Naive thymus-derived CD4-positive, alpha-beta T cell (primary cell): ENCODE measurements at regions of chr14 and their contacts with region 1.

Region 1: DNA sequence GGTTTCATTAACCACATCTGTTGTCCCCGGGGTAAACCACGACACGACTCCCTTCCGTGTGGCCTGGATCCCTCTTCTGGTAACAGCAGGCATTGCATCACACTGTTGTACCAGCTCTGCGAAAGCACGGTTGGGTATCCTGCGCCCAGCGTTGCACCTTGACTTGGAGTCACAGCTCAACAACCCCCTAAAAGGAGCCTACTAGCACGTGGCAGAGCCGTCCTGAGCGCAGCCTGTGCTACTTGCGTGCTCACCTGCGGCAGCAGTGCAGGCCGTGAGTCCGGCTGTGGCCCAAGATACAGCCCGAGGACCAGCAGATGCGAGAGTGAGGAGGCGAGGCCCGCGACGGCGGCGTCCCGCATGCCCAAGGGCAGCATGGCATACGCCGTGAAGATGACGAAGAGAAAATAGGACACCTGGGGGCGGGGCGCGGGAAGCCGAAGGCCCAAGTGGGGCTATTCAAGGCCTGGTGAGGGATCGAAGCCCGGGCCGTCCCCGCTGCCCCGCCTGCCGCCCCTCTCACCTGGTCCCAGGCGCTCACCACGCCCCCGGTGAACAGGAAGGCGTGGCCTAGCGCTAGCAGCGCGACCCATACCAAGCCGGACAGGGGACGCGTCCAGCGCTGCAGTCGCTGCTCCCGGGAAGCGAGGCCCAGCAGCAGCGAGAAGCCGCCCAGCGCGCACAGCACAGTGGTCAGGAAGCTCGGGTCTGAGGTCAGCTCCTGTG is 2.4 kb downstream of the ADCY4 start:
- DNase-seq: peak; percentile 56 to 93 (median 87)
- ATAC-seq: peak; percentile 90
- H3K4me3 ChIP-seq: peak overlapping the region; percentile 43
- H3K4me3 Mint-ChIP-seq: peak overlapping the region; percentile 66 to 94 (median 83)
- H3K27ac ChIP-seq: no peak overlapping the region
- H3K27ac Mint-ChIP-seq: peak overlapping the region; percentile 57 to 93 (median 84)
- H3K4me1 ChIP-seq: peaks cover 37 to 59% of the 10 kb centered on the region in 2 donors
- H3K4me1 Mint-ChIP-seq: peaks cover 25 to 62% (median 40%) of the 10 kb centered on the region in 7 donors
- H3K27me3 ChIP-seq: peaks cover 7 to 13% of the 10 kb centered on the region in 2 donors
- H3K27me3 Mint-ChIP-seq: peaks cover 9 to 46% (median 17%) of the 10 kb centered on the region in 5 donors

Region 2: DNA sequence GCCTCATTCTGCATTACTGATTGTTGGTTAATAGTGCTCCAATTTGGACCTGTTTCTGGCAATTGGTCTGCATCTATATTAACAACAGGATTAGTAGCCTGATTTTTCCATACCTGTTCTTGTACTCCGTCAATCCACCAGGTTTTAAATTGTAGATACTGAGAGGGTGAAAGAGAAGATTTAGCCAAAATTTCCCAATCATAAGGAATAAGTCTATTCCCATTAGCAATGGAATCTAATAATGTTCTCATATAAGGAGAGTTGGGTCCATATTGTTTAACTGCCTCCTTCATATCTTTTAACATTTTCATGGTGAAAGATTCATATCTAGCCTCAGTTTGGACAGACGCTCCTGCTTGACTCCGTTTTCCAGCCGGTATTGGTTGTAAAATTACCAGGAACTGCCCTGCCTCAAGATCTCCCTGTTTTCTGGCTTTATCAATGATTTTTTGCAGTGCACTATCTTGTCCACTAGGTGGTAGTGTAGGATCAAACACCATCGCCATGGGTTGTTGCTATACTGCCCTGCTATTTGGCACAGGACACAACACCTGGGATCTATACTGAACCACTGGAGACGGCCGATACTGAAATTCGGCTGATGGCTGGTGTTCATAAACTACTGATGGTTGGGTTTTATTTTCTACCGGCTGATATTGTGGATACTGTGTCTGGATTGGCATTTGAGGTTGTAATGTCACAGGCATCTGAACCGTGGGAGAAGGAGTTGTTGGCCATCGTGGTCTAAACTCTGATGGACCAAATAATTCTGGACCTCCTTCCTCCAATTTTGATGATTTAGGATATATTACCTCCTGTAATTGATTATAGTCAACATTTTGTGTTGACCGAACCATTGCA is 318.5 kb before region 1 on chr14:
- CTCF ChIA-PET with region 1: no interaction called
- POLR2A ChIA-PET with region 1: no interaction called
- intact Hi-C with region 1: loop called in 1 of 2 experiments (anchors 1 kb)
- DNase-seq: peak in 8 of 9 donors; percentile 17 to 76 (median 67)
- ATAC-seq: peak; percentile 94
- H3K4me3 ChIP-seq: no peak overlapping the region
- H3K4me3 Mint-ChIP-seq: no peak overlapping the region
- H3K27ac ChIP-seq: no peak overlapping the region
- H3K27ac Mint-ChIP-seq: no peak overlapping the region
- H3K4me1 ChIP-seq: peaks cover 0 to 6% of the 10 kb centered on the region in 2 donors
- H3K4me1 Mint-ChIP-seq: peaks cover 8 to 28% (median 25%) of the 10 kb centered on the region in 7 donors
- H3K27me3 ChIP-seq: no peaks in the 10 kb centered on the region
- H3K27me3 Mint-ChIP-seq: peaks cover 0 to 15% (median 0%) of the 10 kb centered on the region in 5 donors

Region 3: GRCh38 chr14:24146978-24147760 is 185.3 kb before region 1 on chr14 and contains the start of gene RNF31:
- CTCF ChIA-PET with region 1: no interaction called
- POLR2A ChIA-PET with region 1: no interaction called
- intact Hi-C with region 1: no loop called
- DNase-seq: peak; percentile 88 to 98 (median 96)
- ATAC-seq: peak; percentile 95
- H3K4me3 ChIP-seq: peak within 1 kb of the TSS; percentile 98
- H3K4me3 Mint-ChIP-seq: peak within 1 kb of the TSS; percentile 91 to 100 (median 98)
- H3K27ac ChIP-seq: peak within 1 kb of the TSS; percentile 88
- H3K27ac Mint-ChIP-seq: peak within 1 kb of the TSS; percentile 94 to 98 (median 96)
- H3K4me1 ChIP-seq: peaks cover 35 to 47% of the 10 kb centered on the region in 2 donors
- H3K4me1 Mint-ChIP-seq: peaks cover 39 to 73% (median 61%) of the 10 kb centered on the region in 7 donors
- H3K27me3 ChIP-seq: no peaks in the 10 kb centered on the region
- H3K27me3 Mint-ChIP-seq: no peaks in the 10 kb centered on the region
- total RNA-seq, gene RNF31: 64.0 to 151 (median 95.4) TPM

Region 4: DNA sequence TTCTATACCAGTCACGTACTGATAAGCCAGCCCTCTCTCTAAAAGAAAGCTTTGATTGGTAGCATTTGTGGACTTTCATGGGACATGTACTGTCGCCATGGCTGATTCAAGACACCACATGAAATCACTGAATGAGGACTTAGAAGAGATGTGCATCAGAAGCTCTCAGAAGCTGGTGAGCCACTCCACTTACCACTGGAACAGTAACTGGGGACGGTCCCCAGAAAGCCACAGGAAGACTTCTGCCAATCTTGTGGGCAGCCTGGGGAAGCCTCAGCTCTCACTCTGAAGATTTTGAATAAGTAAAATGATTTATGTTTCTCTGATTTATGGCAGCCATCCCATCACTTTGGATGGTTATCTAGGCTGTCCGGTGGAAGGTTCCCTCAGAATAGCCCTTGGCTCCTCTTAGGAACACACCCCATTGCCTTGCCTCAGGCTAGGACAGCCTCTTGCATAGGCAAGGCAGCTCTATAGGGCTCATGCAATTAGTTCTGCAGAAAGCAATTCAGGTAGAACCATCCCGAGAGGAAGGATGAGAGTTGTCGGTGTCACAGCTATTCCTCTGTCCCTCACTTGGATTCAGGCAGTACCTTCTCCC is 42.7 kb before region 1 on chr14:
- CTCF ChIA-PET with region 1: no interaction called
- POLR2A ChIA-PET with region 1: no interaction called
- intact Hi-C with region 1: no loop called
- DNase-seq: peak in 1 of 9 donors; percentile 62
- ATAC-seq: peak; percentile 63
- H3K4me3 ChIP-seq: no peak overlapping the region
- H3K4me3 Mint-ChIP-seq: no peak overlapping the region
- H3K27ac ChIP-seq: no peak overlapping the region
- H3K27ac Mint-ChIP-seq: peak overlapping the region in 1 of 9 donors; percentile 28
- H3K4me1 ChIP-seq: no peaks in the 10 kb centered on the region
- H3K4me1 Mint-ChIP-seq: peaks cover 0 to 17% (median 3%) of the 10 kb centered on the region in 7 donors
- H3K27me3 ChIP-seq: no peaks in the 10 kb centered on the region
- H3K27me3 Mint-ChIP-seq: peaks cover 0 to 2% (median 0%) of the 10 kb centered on the region in 5 donors

Region 5: GRCh38 chr14:24310646-24311604 is 21.5 kb before region 1 on chr14 and contains the start of gene LTB4R:
- CTCF ChIA-PET with region 1: interaction called, 34 read pairs
- POLR2A ChIA-PET with region 1: interaction called, 19 read pairs
- intact Hi-C with region 1: loop called (anchors 1 to 2 kb)
- DNase-seq: peak; percentile 61 to 79 (median 73)
- ATAC-seq: peak; percentile 85
- H3K4me3 ChIP-seq: peak within 1 kb of the TSS; percentile 50
- H3K4me3 Mint-ChIP-seq: peak within 1 kb of the TSS; percentile 77 to 91 (median 85)
- H3K27ac ChIP-seq: peak within 1 kb of the TSS; percentile 76
- H3K27ac Mint-ChIP-seq: peak within 1 kb of the TSS; percentile 86 to 95 (median 89)
- H3K4me1 ChIP-seq: peaks cover 60 to 65% of the 10 kb centered on the region in 2 donors
- H3K4me1 Mint-ChIP-seq: peaks cover 58 to 79% (median 72%) of the 10 kb centered on the region in 7 donors
- H3K27me3 ChIP-seq: no peaks in the 10 kb centered on the region
- H3K27me3 Mint-ChIP-seq: no peaks in the 10 kb centered on the region
- total RNA-seq, gene LTB4R: 14.1 to 28.8 (median 26.3) TPM

Region 6: DNA sequence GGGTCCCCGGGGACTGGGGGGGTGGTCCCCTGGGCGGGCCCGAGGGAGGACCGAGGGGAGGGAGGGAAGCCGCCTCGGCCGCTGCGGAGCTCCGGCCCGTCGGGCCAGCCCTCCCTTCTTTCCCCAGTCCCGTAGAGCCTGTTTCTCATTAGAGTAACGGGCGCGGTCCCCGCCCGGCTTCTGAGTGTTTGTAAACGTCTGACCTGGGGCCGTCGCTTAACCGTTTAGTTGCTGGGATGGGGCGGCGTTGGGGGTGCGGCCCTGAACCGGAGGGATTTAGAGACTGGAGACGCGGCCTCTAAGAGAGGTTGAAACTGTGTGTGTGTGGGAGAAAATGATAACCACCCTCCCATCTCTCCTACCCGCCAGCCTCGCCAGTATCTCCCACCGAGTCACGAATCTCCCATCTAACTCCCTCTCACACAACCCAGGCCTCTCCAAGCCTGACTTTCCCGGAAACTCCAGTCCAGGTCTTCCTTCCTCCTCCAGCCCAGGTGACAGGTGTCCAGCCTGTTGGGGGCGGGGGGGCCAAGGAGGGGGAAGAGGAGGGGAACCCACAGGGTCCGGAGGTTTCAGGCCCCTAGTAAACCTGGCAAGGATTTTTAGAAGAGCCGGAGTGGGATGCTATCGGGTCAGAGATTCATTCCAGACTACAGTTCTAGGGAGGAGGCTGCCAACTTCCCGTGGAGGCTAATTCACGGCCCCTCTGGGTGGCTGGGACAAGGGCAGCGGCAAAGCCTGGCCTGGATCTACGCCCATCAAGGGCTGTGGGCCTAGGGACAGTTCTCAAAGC is 34.5 kb after region 1 on chr14:
- CTCF ChIA-PET with region 1: interaction called, 3 read pairs
- POLR2A ChIA-PET with region 1: interaction called, 7 read pairs
- intact Hi-C with region 1: loop called in 1 of 2 experiments (anchors 2 kb)
- DNase-seq: peak in 7 of 9 donors; percentile 12 to 25 (median 19)
- ATAC-seq: peak; percentile 51
- H3K4me3 ChIP-seq: peak overlapping the region; percentile 43
- H3K4me3 Mint-ChIP-seq: peak overlapping the region; percentile 54 to 88 (median 82)
- H3K27ac ChIP-seq: no peak overlapping the region
- H3K27ac Mint-ChIP-seq: peak overlapping the region in 1 of 9 donors; percentile 45
- H3K4me1 ChIP-seq: peaks cover 12 to 26% of the 10 kb centered on the region in 2 donors
- H3K4me1 Mint-ChIP-seq: peaks cover 23 to 36% (median 29%) of the 10 kb centered on the region in 7 donors
- H3K27me3 ChIP-seq: peaks cover 10 to 23% of the 10 kb centered on the region in 2 donors
- H3K27me3 Mint-ChIP-seq: peaks cover 33 to 67% (median 43%) of the 10 kb centered on the region in 5 donors

Region 7: GRCh38 chr14:24411443-24412389 is 79.3 kb after region 1 on chr14:
- CTCF ChIA-PET with region 1: no interaction called
- POLR2A ChIA-PET with region 1: interaction called, 5 read pairs
- intact Hi-C with region 1: loop called in 1 of 2 experiments (anchors 1 kb)
- DNase-seq: peak in 3 of 9 donors; percentile 26 to 31 (median 28)
- ATAC-seq: peak; percentile 68
- H3K4me3 ChIP-seq: no peak overlapping the region
- H3K4me3 Mint-ChIP-seq: no peak overlapping the region
- H3K27ac ChIP-seq: no peak overlapping the region
- H3K27ac Mint-ChIP-seq: no peak overlapping the region
- H3K4me1 ChIP-seq: no peaks in the 10 kb centered on the region
- H3K4me1 Mint-ChIP-seq: no peaks in the 10 kb centered on the region
- H3K27me3 ChIP-seq: no peaks in the 10 kb centered on the region
- H3K27me3 Mint-ChIP-seq: peaks cover 0 to 6% (median 0%) of the 10 kb centered on the region in 5 donors

Region 8: DNA sequence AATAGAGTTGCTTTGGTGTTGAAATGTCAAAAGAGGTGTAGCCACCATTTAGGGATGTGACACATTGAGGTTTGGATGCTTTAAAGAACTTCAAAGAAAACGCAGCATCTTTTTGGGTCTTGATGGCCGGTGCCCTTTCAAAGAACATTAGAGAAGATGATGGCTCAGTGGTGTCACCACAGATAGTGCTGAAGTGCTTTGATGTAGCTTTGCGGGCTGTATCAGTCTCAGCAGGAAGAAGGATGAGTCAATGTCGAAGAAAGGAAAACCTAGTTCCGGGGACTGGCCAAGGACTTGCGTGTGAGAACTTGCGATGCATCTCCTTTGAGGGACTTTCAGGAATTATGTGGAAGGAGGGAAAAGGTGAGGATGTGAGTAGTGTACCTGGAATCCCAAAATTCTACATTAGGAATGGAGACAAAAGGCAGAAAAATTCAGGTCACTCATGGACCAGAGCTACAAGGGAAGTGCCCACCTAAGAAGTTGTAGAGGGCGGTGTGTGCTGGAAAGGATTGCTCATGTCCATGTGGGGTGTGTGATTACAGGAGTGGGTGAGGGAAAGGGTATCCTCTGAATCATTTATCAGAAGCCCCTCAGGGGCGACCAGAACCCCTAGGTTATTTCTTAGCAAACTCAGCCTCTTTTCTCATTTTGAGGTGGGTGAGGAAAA is 341.2 kb after region 1 on chr14:
- CTCF ChIA-PET with region 1: interaction called, 4 read pairs
- POLR2A ChIA-PET with region 1: no interaction called
- intact Hi-C with region 1: loop called in 1 of 2 experiments (anchors 2 kb)
- DNase-seq: peak in 8 of 9 donors; percentile 48 to 72 (median 60)
- ATAC-seq: peak; percentile 90
- H3K4me3 ChIP-seq: peak overlapping the region; percentile 49
- H3K4me3 Mint-ChIP-seq: peak overlapping the region; percentile 74 to 92 (median 86)
- H3K27ac ChIP-seq: peak overlapping the region; percentile 51
- H3K27ac Mint-ChIP-seq: peak overlapping the region; percentile 72 to 95 (median 89)
- H3K4me1 ChIP-seq: peaks cover 30 to 43% of the 10 kb centered on the region in 2 donors
- H3K4me1 Mint-ChIP-seq: peaks cover 36 to 81% (median 59%) of the 10 kb centered on the region in 7 donors
- H3K27me3 ChIP-seq: no peaks in the 10 kb centered on the region
- H3K27me3 Mint-ChIP-seq: no peaks in the 10 kb centered on the region